CD4-positive, alpha-beta T cell (primary cell): ENCODE measurements at regions of chr1 and their contacts with region 1.

Region 1: DNA sequence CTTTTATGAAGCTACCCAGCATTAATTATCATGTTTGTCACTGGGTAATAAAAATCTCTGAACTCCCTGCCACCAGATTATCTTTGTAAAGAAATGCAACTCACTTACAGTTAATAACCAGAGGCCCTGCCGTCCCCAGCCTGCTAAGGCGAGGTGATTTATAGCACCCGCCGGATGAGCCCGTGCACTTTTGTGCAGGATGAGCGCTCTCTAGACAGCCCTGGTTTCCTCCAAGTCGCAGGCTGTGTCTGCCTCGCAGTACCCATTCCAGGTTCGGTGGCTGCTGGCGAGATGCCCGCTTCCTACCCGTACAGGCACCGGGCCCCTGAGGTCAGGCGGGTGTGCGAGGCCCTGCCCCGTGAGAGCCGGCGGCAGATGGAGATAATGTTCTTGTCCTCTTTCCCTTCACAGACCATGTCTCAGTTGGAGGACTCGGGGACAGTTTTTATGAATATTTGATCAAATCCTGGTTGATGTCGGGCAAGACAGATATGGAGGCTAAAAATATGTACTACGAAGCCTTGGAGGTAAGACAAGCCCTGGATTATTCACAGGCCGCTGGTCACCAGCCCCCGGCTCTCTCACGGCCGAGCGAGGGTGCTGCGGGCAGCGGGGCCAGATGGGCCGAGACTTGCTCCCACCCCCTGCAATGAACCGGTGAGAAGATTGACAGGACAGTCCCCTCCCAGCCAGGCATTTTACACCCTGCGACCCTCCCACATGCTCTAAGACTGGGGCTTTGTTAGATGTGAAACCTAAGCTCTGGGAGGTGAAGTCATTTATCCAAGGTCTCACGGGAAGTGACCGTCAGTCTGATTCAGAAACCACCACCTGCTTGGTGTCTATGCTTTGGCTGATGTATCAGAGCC is 28.5 kb upstream of the SELENON start:
- DNase-seq: peak; percentile 15 to 78 (median 58)
- ATAC-seq: peak; percentile 17
- H3K4me3 ChIP-seq: no peak overlapping the region
- H3K4me3 Mint-ChIP-seq: peak overlapping the region; percentile 77
- H3K27ac ChIP-seq: peak overlapping the region; percentile 12 to 72
- H3K27ac Mint-ChIP-seq: peak overlapping the region; percentile 98
- H3K4me1 ChIP-seq: peaks cover 82% of the 10 kb centered on the region
- H3K4me1 Mint-ChIP-seq: peaks cover 85% of the 10 kb centered on the region
- H3K27me3 ChIP-seq: no peaks in the 10 kb centered on the region
- H3K27me3 Mint-ChIP-seq: no peaks in the 10 kb centered on the region
- CTCF ChIP-seq: no peak

Region 2: GRCh38 chr1:25197982-25198662 is 573.4 kb before region 1 on chr1:
- CTCF ChIA-PET with region 1: no interaction called
- POLR2A ChIA-PET with region 1: no interaction called
- intact Hi-C with region 1: no loop called
- DNase-seq: no peak
- ATAC-seq: peak; percentile 52
- H3K4me3 ChIP-seq: no peak overlapping the region
- H3K4me3 Mint-ChIP-seq: no peak overlapping the region
- H3K27ac ChIP-seq: no peak overlapping the region
- H3K27ac Mint-ChIP-seq: no peak overlapping the region
- H3K4me1 ChIP-seq: peaks cover 6% of the 10 kb centered on the region
- H3K4me1 Mint-ChIP-seq: peaks cover 18% of the 10 kb centered on the region
- H3K27me3 ChIP-seq: peaks cover 0 to 2% of the 10 kb centered on the region in 2 experiments
- H3K27me3 Mint-ChIP-seq: no peaks in the 10 kb centered on the region
- CTCF ChIP-seq: no peak

Region 3: DNA sequence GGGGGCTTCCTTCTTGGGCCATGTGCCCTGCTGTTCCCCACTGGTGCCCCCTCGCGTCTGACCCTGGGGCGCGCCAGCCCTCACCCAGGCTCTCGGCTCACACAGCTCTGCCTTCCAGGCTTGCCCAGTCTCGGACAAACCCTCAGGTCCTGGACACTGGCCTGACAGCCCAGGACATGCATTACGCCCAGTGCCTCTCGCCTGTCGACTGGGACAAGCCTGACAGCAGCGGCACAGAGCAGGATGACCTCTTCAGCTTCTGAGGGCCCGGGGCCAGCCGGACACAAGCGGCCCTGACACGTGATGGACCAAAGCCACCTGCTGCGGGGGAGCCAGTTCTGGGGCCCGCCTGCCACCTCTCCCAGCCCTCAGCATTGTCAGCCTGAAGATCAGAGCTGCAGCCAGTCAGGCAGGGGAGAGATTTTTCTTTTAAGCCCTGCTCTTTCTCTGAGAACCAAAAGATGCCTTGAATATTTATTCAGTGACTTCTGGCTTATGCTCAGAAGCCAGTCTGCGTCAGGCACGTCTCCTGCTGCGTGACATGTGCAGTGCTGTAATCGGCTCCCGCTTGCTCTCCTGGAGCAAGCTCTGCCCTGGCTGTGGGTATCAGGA is 204.6 kb before region 1 on chr1:
- CTCF ChIA-PET with region 1: no interaction called
- POLR2A ChIA-PET with region 1: interaction called, 10 read pairs
- intact Hi-C with region 1: no loop called
- DNase-seq: peak in 9 of 14 experiments; percentile 30 to 74 (median 65)
- ATAC-seq: no peak
- H3K4me3 ChIP-seq: peak overlapping the region; percentile 85
- H3K4me3 Mint-ChIP-seq: peak overlapping the region; percentile 99
- H3K27ac ChIP-seq: peak overlapping the region in 1 of 2 donors; percentile 15
- H3K27ac Mint-ChIP-seq: peak overlapping the region; percentile 87
- H3K4me1 ChIP-seq: peaks cover 94% of the 10 kb centered on the region
- H3K4me1 Mint-ChIP-seq: peaks cover 74% of the 10 kb centered on the region
- H3K27me3 ChIP-seq: no peaks in the 10 kb centered on the region
- H3K27me3 Mint-ChIP-seq: no peaks in the 10 kb centered on the region
- CTCF ChIP-seq: peak; percentile 42

Region 4: GRCh38 chr1:25616095-25616986 is 155.1 kb before region 1 on chr1 and contains the start of gene MAN1C1:
- CTCF ChIA-PET with region 1: interaction called, 10 read pairs
- POLR2A ChIA-PET with region 1: interaction called, 60 read pairs
- intact Hi-C with region 1: no loop called
- DNase-seq: peak; percentile 69 to 95 (median 81)
- ATAC-seq: peak; percentile 56
- H3K4me3 ChIP-seq: peak within 1 kb of the TSS; percentile 73
- H3K4me3 Mint-ChIP-seq: peak within 1 kb of the TSS; percentile 90
- H3K27ac ChIP-seq: peak within 1 kb of the TSS; percentile 27 to 84
- H3K27ac Mint-ChIP-seq: peak within 1 kb of the TSS; percentile 93
- H3K4me1 ChIP-seq: peaks cover 55% of the 10 kb centered on the region
- H3K4me1 Mint-ChIP-seq: peaks cover 50% of the 10 kb centered on the region
- H3K27me3 ChIP-seq: no peaks in the 10 kb centered on the region
- H3K27me3 Mint-ChIP-seq: no peaks in the 10 kb centered on the region
- CTCF ChIP-seq: peak; percentile 49
- total RNA-seq, gene MAN1C1: 44.4 to 46.9 TPM

Region 5: GRCh38 chr1:25642574-25643108 is 128.8 kb before region 1 on chr1:
- CTCF ChIA-PET with region 1: no interaction called
- POLR2A ChIA-PET with region 1: interaction called, 26 read pairs
- intact Hi-C with region 1: no loop called
- DNase-seq: peak; percentile 55 to 90 (median 70)
- ATAC-seq: peak; percentile 89
- H3K4me3 ChIP-seq: peak overlapping the region; percentile 36
- H3K4me3 Mint-ChIP-seq: peak overlapping the region; percentile 82
- H3K27ac ChIP-seq: peak overlapping the region; percentile 68 to 72
- H3K27ac Mint-ChIP-seq: peak overlapping the region; percentile 89
- H3K4me1 ChIP-seq: peaks cover 60% of the 10 kb centered on the region
- H3K4me1 Mint-ChIP-seq: peaks cover 90% of the 10 kb centered on the region
- H3K27me3 ChIP-seq: no peaks in the 10 kb centered on the region
- H3K27me3 Mint-ChIP-seq: no peaks in the 10 kb centered on the region
- CTCF ChIP-seq: no peak

Region 6: DNA sequence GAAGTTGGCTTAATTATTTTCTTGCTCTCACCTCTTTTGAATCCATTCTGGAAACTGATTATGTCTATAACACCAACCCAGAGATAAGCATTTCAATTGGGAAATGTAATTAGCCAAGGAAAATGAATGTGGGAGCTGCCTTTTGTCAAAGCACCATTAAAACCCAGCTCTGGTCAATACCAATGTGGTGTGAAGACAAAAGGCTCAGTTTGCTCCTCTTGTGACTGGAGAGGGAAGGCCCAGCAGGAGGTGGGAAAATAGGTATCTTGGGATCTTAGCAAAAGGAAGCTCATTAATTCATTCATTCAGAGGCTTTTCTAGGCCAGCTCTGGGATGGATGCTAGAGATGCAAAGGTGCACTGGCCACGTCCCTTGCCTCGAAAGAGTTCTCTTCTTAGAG is 46.5 kb before region 1 on chr1:
- CTCF ChIA-PET with region 1: interaction called, 3 read pairs
- POLR2A ChIA-PET with region 1: interaction called, 3 read pairs
- intact Hi-C with region 1: loop called in 1 of 2 experiments (anchors 5 kb)
- DNase-seq: no peak
- ATAC-seq: no peak
- H3K4me3 ChIP-seq: no peak overlapping the region
- H3K4me3 Mint-ChIP-seq: no peak overlapping the region
- H3K27ac ChIP-seq: no peak overlapping the region
- H3K27ac Mint-ChIP-seq: peak overlapping the region; percentile 74
- H3K4me1 ChIP-seq: peaks cover 57% of the 10 kb centered on the region
- H3K4me1 Mint-ChIP-seq: peaks cover 86% of the 10 kb centered on the region
- H3K27me3 ChIP-seq: no peaks in the 10 kb centered on the region
- H3K27me3 Mint-ChIP-seq: no peaks in the 10 kb centered on the region
- CTCF ChIP-seq: no peak

Region 7: GRCh38 chr1:25796811-25797458 is 25.5 kb after region 1 on chr1:
- CTCF ChIA-PET with region 1: interaction called, 10 read pairs
- POLR2A ChIA-PET with region 1: interaction called, 44 read pairs
- intact Hi-C with region 1: loop called (anchors 1 to 2 kb)
- DNase-seq: peak; percentile 75 to 92 (median 82)
- ATAC-seq: peak; percentile 65
- H3K4me3 ChIP-seq: no peak overlapping the region
- H3K4me3 Mint-ChIP-seq: peak overlapping the region; percentile 85
- H3K27ac ChIP-seq: peak overlapping the region; percentile 44 to 47
- H3K27ac Mint-ChIP-seq: peak overlapping the region; percentile 89
- H3K4me1 ChIP-seq: peaks cover 67% of the 10 kb centered on the region
- H3K4me1 Mint-ChIP-seq: peaks cover 67% of the 10 kb centered on the region
- H3K27me3 ChIP-seq: no peaks in the 10 kb centered on the region
- H3K27me3 Mint-ChIP-seq: no peaks in the 10 kb centered on the region
- CTCF ChIP-seq: peak; percentile 75

Region 8: GRCh38 chr1:25848531-25848930 is 77.1 kb after region 1 on chr1:
- CTCF ChIA-PET with region 1: no interaction called
- POLR2A ChIA-PET with region 1: no interaction called
- intact Hi-C with region 1: no loop called
- DNase-seq: no peak
- ATAC-seq: no peak
- H3K4me3 ChIP-seq: no peak overlapping the region
- H3K4me3 Mint-ChIP-seq: no peak overlapping the region
- H3K27ac ChIP-seq: no peak overlapping the region
- H3K27ac Mint-ChIP-seq: no peak overlapping the region
- H3K4me1 ChIP-seq: no peaks in the 10 kb centered on the region
- H3K4me1 Mint-ChIP-seq: no peaks in the 10 kb centered on the region
- H3K27me3 ChIP-seq: no peaks in the 10 kb centered on the region
- H3K27me3 Mint-ChIP-seq: no peaks in the 10 kb centered on the region
- CTCF ChIP-seq: no peak